IMR-90 (cell line): ENCODE measurements at regions of chr3 and their contacts with region 1.

Region 1: GRCh38 chr3:108090701-108091451 is at the start of gene CD47:
- DNase-seq: peak; percentile 87
- ATAC-seq: peak; percentile 92
- H3K4me3 ChIP-seq: peak within 1 kb of the TSS; percentile 99
- H3K27ac ChIP-seq: peak within 1 kb of the TSS; percentile 95
- H3K4me1 ChIP-seq: peaks cover 3% of the 10 kb centered on the region; the same call in 1 of the 2 replicates
- H3K27me3 ChIP-seq: no peaks in the 10 kb centered on the region
- CTCF ChIP-seq: no peak
- POLR2A ChIP-seq: peak; percentile 84
- RAD21 ChIP-seq: no peak
- total RNA-seq, gene CD47: 52.0 and 110 TPM in 2 replicates

Region 2: GRCh38 chr3:107927361-107928083 is 163.4 kb before region 1 on chr3:
- CTCF ChIA-PET with region 1: no interaction called
- POLR2A ChIA-PET with region 1: no interaction called
- dilution Hi-C with region 1: no loop called
- in situ Hi-C with region 1: no loop called
- intact Hi-C with region 1: loop called (anchors 5 kb)
- DNase-seq: peak; percentile 67
- ATAC-seq: peak; percentile 100
- H3K4me3 ChIP-seq: peak overlapping the region; percentile 55
- H3K27ac ChIP-seq: no peak overlapping the region
- H3K4me1 ChIP-seq: no peaks in the 10 kb centered on the region
- H3K27me3 ChIP-seq: peaks cover 8% of the 10 kb centered on the region
- CTCF ChIP-seq: peak; percentile 80
- POLR2A ChIP-seq: no peak
- RAD21 ChIP-seq: peak; percentile 64

Region 3: DNA sequence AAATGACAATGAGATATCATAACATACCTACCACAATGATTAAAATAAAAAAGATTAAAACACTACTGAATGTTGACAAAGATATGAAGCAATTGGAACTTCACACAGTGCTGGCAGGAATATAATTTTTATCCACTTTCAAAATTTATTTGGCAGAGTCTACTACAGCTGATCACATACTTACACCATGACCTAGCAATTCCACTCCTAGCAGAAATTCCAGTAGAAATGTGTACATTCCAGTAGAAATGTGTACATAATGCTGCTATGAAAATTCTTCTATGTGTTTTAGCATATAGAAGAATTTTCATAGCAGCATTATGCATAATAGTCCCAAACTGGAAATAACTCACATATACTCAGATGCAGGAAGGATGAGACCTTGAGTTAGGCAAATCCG is 87.8 kb after region 1 on chr3:
- CTCF ChIA-PET with region 1: no interaction called
- POLR2A ChIA-PET with region 1: no interaction called
- dilution Hi-C with region 1: no loop called
- in situ Hi-C with region 1: no loop called
- intact Hi-C with region 1: loop called (anchors 2 kb)
- DNase-seq: peak; percentile 66
- ATAC-seq: peak; percentile 55
- H3K4me3 ChIP-seq: no peak overlapping the region
- H3K27ac ChIP-seq: peak overlapping the region; percentile 72; the same call in 1 of the 2 replicates
- H3K4me1 ChIP-seq: peaks cover 9% of the 10 kb centered on the region
- H3K27me3 ChIP-seq: no peaks in the 10 kb centered on the region
- CTCF ChIP-seq: no peak
- POLR2A ChIP-seq: no peak
- RAD21 ChIP-seq: no peak

Region 4: DNA sequence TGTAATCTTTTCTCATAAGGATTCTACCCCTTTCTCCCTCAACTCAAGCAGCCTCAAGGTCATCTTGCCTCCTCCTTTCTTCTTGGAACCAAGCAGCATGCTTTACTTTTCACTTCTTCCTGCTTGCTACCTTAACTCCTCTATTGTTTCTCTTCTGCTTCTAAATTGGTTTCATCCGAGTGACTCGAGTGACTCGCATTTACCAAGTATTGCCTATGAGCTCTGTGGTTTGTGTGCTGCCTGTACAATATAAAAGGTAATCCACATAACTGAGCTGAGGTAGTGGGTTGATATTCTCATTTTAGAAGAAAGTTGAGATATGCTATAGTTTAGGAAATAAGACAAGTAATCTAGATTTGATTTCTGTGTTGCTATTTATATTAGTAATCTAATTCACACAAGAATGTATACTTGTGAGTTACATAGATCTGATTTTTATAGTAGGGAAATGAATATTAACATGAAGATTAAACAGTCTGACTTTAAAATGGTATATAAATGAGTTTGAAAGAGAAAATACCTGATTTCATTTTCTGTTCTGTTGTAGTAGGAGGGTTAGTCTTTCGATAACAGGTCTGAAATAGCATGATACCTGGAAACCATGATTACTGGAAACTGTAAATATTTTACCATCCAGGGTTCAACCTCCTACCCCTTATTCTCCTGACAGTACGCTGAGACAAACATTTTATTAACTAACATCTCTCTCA is 211.0 kb after region 1 on chr3:
- CTCF ChIA-PET with region 1: no interaction called
- POLR2A ChIA-PET with region 1: no interaction called
- dilution Hi-C with region 1: no loop called
- in situ Hi-C with region 1: no loop called
- intact Hi-C with region 1: loop called (anchors 10 kb)
- DNase-seq: peak; percentile 31
- ATAC-seq: no peak; the same call in 1 of the 2 replicates
- H3K4me3 ChIP-seq: no peak overlapping the region
- H3K27ac ChIP-seq: no peak overlapping the region
- H3K4me1 ChIP-seq: peaks cover 6% of the 10 kb centered on the region
- H3K27me3 ChIP-seq: no peaks in the 10 kb centered on the region
- CTCF ChIP-seq: no peak
- POLR2A ChIP-seq: no peak
- RAD21 ChIP-seq: no peak

Region 5: DNA sequence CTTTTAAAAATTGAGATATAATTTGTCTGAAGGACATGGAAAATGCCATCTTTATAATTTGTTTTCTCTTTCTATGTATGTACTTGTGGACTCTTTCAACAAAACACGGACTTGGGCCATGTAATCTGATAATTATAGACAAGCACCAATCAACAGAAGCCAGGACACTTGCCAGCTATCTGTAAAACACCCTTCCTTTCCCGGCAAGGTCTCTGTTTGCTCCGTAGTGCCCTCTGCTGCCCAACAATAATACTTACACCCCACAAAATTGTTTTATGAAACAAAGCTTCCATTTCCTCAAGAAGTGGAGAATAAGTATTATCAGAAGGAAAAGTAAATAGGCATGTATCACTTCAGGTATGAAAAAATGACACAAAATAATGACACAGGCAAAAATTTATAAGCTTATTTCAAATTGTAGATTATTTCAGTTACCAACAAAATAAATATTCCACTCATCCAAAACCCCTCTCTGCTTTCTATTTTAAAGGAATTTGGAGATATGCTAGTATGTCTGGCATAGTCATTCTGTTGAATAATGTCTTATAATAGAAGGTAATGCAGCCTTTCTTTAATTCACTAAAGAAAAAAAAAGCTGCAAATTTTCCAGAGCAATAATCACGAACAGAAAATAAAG is 386.8 kb after region 1 on chr3:
- CTCF ChIA-PET with region 1: no interaction called
- POLR2A ChIA-PET with region 1: no interaction called
- dilution Hi-C with region 1: no loop called
- in situ Hi-C with region 1: no loop called
- intact Hi-C with region 1: loop called (anchors 5 kb)
- DNase-seq: peak; percentile 72
- ATAC-seq: peak; percentile 76
- H3K4me3 ChIP-seq: no peak overlapping the region
- H3K27ac ChIP-seq: no peak overlapping the region
- H3K4me1 ChIP-seq: 0 out of 2 replicates have a peak, but pooled peaks cover 2% of the 10 kb centered on the region
- H3K27me3 ChIP-seq: no peaks in the 10 kb centered on the region
- CTCF ChIP-seq: peak; percentile 73
- POLR2A ChIP-seq: no peak
- RAD21 ChIP-seq: peak; percentile 83